ENCODE measurements at regions of chr22 and their contacts with region 1.

Region 1: GRCh38 chr22:39908737-39909136 is 7.9 kb downstream of the GRAP2 start:
- DNase-seq: peak in 1 of 5 donors; percentile 71
- H3K4me3 ChIP-seq: peak overlapping the region; percentile 68
- H3K4me3 Mint-ChIP-seq: peak overlapping the region; percentile 91 to 99 (median 97)
- H3K27ac ChIP-seq: peak overlapping the region; percentile 0
- H3K27ac Mint-ChIP-seq: peak overlapping the region in 7 of 8 donors; percentile 91 to 99 (median 98)
- H3K4me1 ChIP-seq: peaks cover 60% of the 10 kb centered on the region
- H3K4me1 Mint-ChIP-seq: peaks cover 70 to 85% (median 77%) of the 10 kb centered on the region in 3 donors
- H3K27me3 ChIP-seq: no peaks in the 10 kb centered on the region
- H3K27me3 Mint-ChIP-seq: no peaks in the 10 kb centered on the region

Region 2: DNA sequence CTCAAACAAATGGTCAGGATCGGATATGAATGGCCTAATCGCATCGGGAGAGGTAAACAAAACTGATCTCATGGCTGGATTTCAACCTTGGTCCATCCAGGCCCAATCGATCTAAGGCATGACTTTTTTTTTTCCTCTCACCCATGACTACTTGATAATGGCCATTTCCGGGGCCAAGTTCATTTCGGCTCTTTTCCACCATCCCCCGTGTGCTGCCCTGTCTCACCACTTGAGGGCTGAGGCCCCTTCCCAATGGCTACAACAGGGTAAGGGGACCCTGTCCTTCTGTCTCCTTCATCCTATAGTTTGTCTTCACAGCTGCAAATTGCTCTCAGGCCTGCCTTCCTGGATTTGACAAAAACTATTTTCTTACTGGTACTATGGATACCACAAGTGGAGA is 18.8 kb after region 1 on chr22:
- CTCF ChIA-PET with region 1: interaction called, 36 read pairs
- POLR2A ChIA-PET with region 1: interaction called, 11 read pairs
- DNase-seq: no peak
- H3K4me3 ChIP-seq: peak overlapping the region; percentile 65
- H3K4me3 Mint-ChIP-seq: no peak overlapping the region
- H3K27ac ChIP-seq: no peak overlapping the region
- H3K27ac Mint-ChIP-seq: peak overlapping the region in 1 of 8 donors; percentile 67
- H3K4me1 ChIP-seq: peaks cover 98% of the 10 kb centered on the region
- H3K4me1 Mint-ChIP-seq: peaks cover 41 to 42% (median 41%) of the 10 kb centered on the region in 3 donors
- H3K27me3 ChIP-seq: no peaks in the 10 kb centered on the region
- H3K27me3 Mint-ChIP-seq: no peaks in the 10 kb centered on the region

Measured in CD8-positive, alpha-beta memory T cell (primary cell).